Common myeloid progenitor, CD34-positive (primary cell): ENCODE measurements at regions of chr10 and their contacts with region 1.

Region 1: GRCh38 chr10:112434988-112435619 is 11.6 kb downstream of the ZDHHC6 start:
- DNase-seq: peak; percentile 31 to 69 (median 67)
- H3K4me3 ChIP-seq: no peak overlapping the region
- H3K27ac ChIP-seq: no peak overlapping the region
- H3K4me1 ChIP-seq: no peaks in the 10 kb centered on the region
- H3K27me3 ChIP-seq: no peaks in the 10 kb centered on the region

Region 2: GRCh38 chr10:112314822-112315474 is 120.2 kb before region 1 on chr10:
- CTCF ChIA-PET with region 1: interaction called, 15 read pairs
- POLR2A ChIA-PET with region 1: no interaction called
- DNase-seq: peak; percentile 70 to 83 (median 78)
- H3K4me3 ChIP-seq: no peak overlapping the region
- H3K27ac ChIP-seq: no peak overlapping the region
- H3K4me1 ChIP-seq: peaks cover 0 to 3% (median 0%) of the 10 kb centered on the region in 4 experiments
- H3K27me3 ChIP-seq: peaks cover 0 to 10% (median 4%) of the 10 kb centered on the region in 5 experiments

Region 3: GRCh38 chr10:112701211-112701877 is 266.2 kb after region 1 on chr10:
- CTCF ChIA-PET with region 1: no interaction called
- POLR2A ChIA-PET with region 1: no interaction called
- DNase-seq: no peak
- H3K4me3 ChIP-seq: no peak overlapping the region
- H3K27ac ChIP-seq: no peak overlapping the region
- H3K4me1 ChIP-seq: no peaks in the 10 kb centered on the region
- H3K27me3 ChIP-seq: no peaks in the 10 kb centered on the region